A673 (cell line): ENCODE measurements at regions of chr12 and their contacts with region 1.

Region 1: GRCh38 chr12:70365648-70366518 is at the start of gene KCNMB4:
- DNase-seq: peak; percentile 81
- H3K4me3 ChIP-seq: peak within 1 kb of the TSS; percentile 68
- H3K27ac ChIP-seq: no peak within 1 kb of the TSS
- H3K4me1 ChIP-seq: peaks cover 6% of the 10 kb centered on the region
- H3K27me3 ChIP-seq: peaks cover 19% of the 10 kb centered on the region
- CTCF ChIP-seq: 0 out of 2 replicates have a peak, but pooled peaks have one; percentile 9
- total RNA-seq, gene KCNMB4: 1.9 and 2.3 TPM in 2 replicates

Region 2: GRCh38 chr12:70242695-70243509 is 123.0 kb before region 1 on chr12 and contains the start of gene CNOT2:
- CTCF ChIA-PET with region 1: no interaction called
- POLR2A ChIA-PET with region 1: no interaction called
- intact Hi-C with region 1: loop called (anchors 5 kb)
- DNase-seq: peak; percentile 93
- H3K4me3 ChIP-seq: peak within 1 kb of the TSS; percentile 69
- H3K27ac ChIP-seq: peak within 1 kb of the TSS; percentile 94
- H3K4me1 ChIP-seq: peaks cover 14% of the 10 kb centered on the region
- H3K27me3 ChIP-seq: no peaks in the 10 kb centered on the region
- CTCF ChIP-seq: no peak
- total RNA-seq, gene CNOT2: 68.9 and 89.0 TPM in 2 replicates